Prostate gland (tissue), 2 donors: ENCODE measurements at regions of chr2 and their contacts with region 1.

Region 1: DNA sequence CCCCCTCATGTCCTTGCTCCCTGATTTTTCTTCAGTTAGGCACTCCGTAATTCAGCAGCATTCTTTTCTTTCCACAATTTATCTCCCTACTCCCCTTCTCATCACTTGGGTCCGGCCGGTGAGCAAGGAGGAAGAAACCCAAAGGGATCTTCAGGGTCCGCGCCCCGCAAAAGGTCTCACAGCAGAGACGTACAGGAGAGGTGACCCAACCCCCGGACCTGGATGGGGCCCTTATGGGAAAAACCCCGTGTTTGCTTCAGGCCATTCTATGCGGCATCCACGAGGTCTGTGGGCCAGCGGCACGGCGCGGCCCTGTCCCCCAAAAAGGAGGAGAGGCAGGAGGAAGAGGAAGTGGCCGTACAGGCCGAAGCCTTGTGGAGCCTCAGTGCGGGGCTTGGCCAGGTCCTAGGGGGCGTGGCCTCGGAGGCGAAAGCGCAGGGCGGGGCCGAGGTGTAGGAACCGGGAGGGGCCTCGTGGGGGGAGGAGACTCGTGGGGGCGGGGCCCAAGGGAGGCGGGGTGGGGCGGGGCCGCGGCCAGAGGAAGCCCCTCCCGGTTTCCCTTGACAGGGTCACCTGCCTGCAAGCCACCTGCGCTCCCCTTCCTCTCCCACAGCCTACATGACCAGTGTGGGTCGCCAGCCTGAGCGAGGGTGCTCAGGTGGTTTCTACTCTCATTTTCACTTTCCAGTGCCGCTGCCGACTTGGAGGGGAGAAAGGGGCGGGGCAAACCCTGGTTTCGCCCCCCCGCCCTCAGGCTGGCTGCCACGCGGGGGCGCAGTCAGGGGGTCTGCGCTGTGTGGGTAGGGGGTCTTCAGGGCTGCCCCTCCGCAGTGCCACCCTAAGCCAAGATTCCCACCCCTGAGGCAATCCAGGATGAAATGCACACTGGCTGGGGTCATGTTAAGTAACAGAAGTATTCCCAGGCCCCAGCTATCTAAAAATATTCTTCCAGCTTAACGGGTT is 156.4 kb upstream of the XPO1 start:
- DNase-seq: peak; percentile 94
- H3K4me3 ChIP-seq: peak overlapping the region; percentile 64 to 65
- H3K27ac ChIP-seq: peak overlapping the region; percentile 82 to 84
- H3K4me1 ChIP-seq: no peaks in the 10 kb centered on the region
- H3K27me3 ChIP-seq: no peaks in the 10 kb centered on the region
- CTCF ChIP-seq: peak in 3 of 4 experiments; percentile 33 to 54 (median 54)
- POLR2A ChIP-seq: peak; percentile 78

Region 2: GRCh38 chr2:61649021-61649420 is 45.6 kb before region 1 on chr2:
- intact Hi-C with region 1: no loop called
- DNase-seq: no peak
- H3K4me3 ChIP-seq: no peak overlapping the region
- H3K27ac ChIP-seq: no peak overlapping the region
- H3K4me1 ChIP-seq: no peaks in the 10 kb centered on the region
- H3K27me3 ChIP-seq: no peaks in the 10 kb centered on the region
- CTCF ChIP-seq: no peak
- POLR2A ChIP-seq: no peak

Region 3: GRCh38 chr2:61769093-61769675 is 74.6 kb after region 1 on chr2:
- intact Hi-C with region 1: no loop called
- DNase-seq: no peak
- H3K4me3 ChIP-seq: no peak overlapping the region
- H3K27ac ChIP-seq: no peak overlapping the region
- H3K4me1 ChIP-seq: no peaks in the 10 kb centered on the region
- H3K27me3 ChIP-seq: no peaks in the 10 kb centered on the region
- CTCF ChIP-seq: no peak
- POLR2A ChIP-seq: no peak

Region 4: GRCh38 chr2:61854474-61855182 is 160.0 kb after region 1 on chr2:
- intact Hi-C with region 1: loop called (anchors 10 kb)
- DNase-seq: peak; percentile 96
- H3K4me3 ChIP-seq: peak overlapping the region; percentile 57 to 73
- H3K27ac ChIP-seq: peak overlapping the region; percentile 89 to 92
- H3K4me1 ChIP-seq: no peaks in the 10 kb centered on the region
- H3K27me3 ChIP-seq: no peaks in the 10 kb centered on the region
- CTCF ChIP-seq: peak in 1 of 4 experiments; percentile 24
- POLR2A ChIP-seq: no peak